ENCODE measurements at regions of chr5 and their contacts with region 1.

Region 1: GRCh38 chr5:80093796-80094195 is 58.6 kb downstream of the THBS4 start:
- DNase-seq: no peak
- H3K4me3 ChIP-seq: no peak overlapping the region
- H3K27ac ChIP-seq: no peak overlapping the region
- H3K4me1 ChIP-seq: no peaks in the 10 kb centered on the region
- H3K27me3 ChIP-seq: no peaks in the 10 kb centered on the region
- CTCF ChIP-seq: no peak
- POLR2A ChIP-seq: no peak

Region 2: DNA sequence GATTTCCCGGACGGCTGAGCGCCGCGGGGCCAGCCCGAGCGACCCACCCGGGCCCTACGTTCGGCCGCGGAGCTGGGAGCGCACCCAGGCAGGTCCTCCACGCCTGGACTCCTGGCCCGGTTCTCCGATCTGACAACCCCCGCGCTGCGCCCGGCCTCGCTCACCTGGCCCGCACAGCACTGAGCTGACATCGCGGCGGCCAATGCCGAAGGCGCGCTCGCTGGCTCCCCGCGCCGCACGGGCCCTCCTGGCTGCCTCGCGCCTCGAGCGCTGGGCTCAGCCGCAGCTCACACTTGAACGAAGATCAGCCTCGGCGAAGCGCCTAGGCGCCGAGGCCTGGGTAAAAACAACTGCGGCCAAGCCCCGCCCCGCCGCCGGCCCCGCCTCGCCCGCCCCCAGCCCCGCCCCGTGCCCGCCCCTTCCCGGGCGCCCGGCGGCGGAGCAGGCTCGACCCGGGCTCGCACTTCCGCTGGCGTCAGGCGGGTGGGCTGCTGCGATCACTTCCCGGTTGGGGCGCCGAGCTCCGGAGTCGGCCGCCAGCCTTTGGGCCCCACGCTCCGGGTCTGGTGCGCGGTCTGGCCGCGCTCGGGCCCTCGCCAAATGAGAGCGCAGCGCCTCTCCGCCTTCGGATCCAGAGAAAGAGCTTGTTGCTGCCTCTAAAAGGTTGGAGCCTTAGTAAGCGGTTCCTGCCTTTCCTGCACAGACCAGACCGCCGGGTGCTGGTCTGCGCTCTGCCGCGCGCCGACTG is 162.1 kb after region 1 on chr5 and contains the start of gene SERINC5:
- CTCF ChIA-PET with region 1: interaction called, 15 read pairs
- POLR2A ChIA-PET with region 1: no interaction called
- dilution Hi-C with region 1: no loop called
- intact Hi-C with region 1: loop called (anchors 5 kb)
- DNase-seq: peak; percentile 79
- H3K4me3 ChIP-seq: peak within 1 kb of the TSS; percentile 64 to 85 (median 70)
- H3K27ac ChIP-seq: peak within 1 kb of the TSS; percentile 65
- H3K4me1 ChIP-seq: peaks cover 7% of the 10 kb centered on the region
- H3K27me3 ChIP-seq: no peaks in the 10 kb centered on the region
- CTCF ChIP-seq: peak in 1 of 2 donors; percentile 3
- POLR2A ChIP-seq: peak; percentile 96
- total RNA-seq, gene SERINC5: 9.9 and 10.1 TPM in 2 replicates

Region 3: DNA sequence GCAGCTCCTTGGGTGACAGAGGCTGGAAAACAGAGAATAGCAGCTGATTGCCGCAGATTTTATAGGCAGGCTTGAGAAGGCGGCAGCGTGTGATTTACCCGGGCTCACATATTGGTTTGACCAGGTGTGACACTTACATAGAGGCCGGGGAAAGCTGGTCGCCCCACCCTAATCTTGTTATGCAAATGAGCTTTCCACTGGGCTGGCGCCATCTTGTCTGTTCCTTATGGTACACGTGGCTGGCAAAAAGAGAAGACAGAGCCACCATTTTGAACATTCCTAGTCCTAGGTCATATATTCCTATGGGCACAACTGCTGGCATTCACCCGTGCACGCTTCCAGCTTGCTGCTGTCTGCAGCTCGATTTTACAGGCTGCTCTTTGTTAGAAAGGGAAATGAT is 214.7 kb after region 1 on chr5:
- CTCF ChIA-PET with region 1: interaction called, 460 read pairs
- POLR2A ChIA-PET with region 1: no interaction called
- dilution Hi-C with region 1: no loop called
- intact Hi-C with region 1: loop called (anchors 1 kb)
- DNase-seq: no peak
- H3K4me3 ChIP-seq: no peak overlapping the region
- H3K27ac ChIP-seq: no peak overlapping the region
- H3K4me1 ChIP-seq: no peaks in the 10 kb centered on the region
- H3K27me3 ChIP-seq: no peaks in the 10 kb centered on the region
- CTCF ChIP-seq: no peak
- POLR2A ChIP-seq: no peak

Region 4: DNA sequence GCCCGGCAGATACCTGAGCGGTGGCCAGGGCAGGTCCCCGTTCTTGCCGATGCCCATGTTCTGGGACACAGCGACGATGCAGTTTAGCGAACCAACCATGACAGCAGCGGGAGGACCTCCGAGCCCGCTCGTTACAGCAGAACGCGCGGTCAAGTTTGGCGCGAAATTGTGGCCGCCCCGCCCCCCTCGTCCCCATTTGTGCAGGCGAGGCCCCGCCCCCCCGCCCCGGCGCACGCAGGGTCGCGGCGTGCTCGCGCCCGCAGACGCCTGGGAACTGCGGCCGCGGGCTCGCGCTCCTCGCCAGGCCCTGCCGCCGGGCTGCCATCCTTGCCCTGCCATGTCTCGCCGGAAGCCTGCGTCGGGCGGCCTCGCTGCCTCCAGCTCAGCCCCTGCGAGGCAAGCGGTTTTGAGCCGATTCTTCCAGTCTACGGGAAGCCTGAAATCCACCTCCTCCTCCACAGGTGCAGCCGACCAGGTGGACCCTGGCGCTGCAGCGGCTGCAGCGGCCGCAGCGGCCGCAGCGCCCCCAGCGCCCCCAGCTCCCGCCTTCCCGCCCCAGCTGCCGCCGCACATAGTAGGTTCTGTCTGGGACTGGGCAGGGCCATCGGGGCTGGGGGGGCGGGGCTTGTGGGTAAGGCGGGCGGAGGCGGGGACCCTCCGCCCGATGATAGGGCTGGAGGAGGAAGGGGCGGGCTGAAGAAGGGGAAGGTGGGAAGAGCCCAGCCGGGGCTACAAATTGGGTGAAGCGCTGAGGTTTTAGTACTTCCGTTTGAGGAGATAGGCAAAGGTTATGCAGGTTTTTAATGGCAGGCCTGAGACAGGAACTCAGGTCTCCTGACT is 560.8 kb after region 1 on chr5 and contains the starts of genes DHFR and MSH3:
- CTCF ChIA-PET with region 1: interaction called, 3 read pairs
- POLR2A ChIA-PET with region 1: no interaction called
- dilution Hi-C with region 1: no loop called
- intact Hi-C with region 1: loop called (anchors 5 kb)
- DNase-seq: peak; percentile 88
- H3K4me3 ChIP-seq: peak within 1 kb of the TSS; percentile 76 to 93 (median 81)
- H3K27ac ChIP-seq: peak within 1 kb of the TSS; percentile 79
- H3K4me1 ChIP-seq: peaks cover 20% of the 10 kb centered on the region
- H3K27me3 ChIP-seq: no peaks in the 10 kb centered on the region
- CTCF ChIP-seq: peak; percentile 5 to 18
- POLR2A ChIP-seq: peak; percentile 80
- total RNA-seq, gene DHFR: 32.8 and 35.8 TPM in 2 replicates
- total RNA-seq, gene MSH3: 10.5 and 13.0 TPM in 2 replicates

Region 5: GRCh38 chr5:81194633-81195333 is 1101.0 kb after region 1 on chr5:
- CTCF ChIA-PET with region 1: no interaction called
- POLR2A ChIA-PET with region 1: no interaction called
- dilution Hi-C with region 1: no loop called
- intact Hi-C with region 1: loop called (anchors 10 kb)
- DNase-seq: peak; percentile 77
- H3K4me3 ChIP-seq: no peak overlapping the region
- H3K27ac ChIP-seq: no peak overlapping the region
- H3K4me1 ChIP-seq: no peaks in the 10 kb centered on the region
- H3K27me3 ChIP-seq: peaks cover 5 to 14% of the 10 kb centered on the region in 2 experiments
- CTCF ChIP-seq: peak; percentile 94 to 95
- POLR2A ChIP-seq: no peak